Activated CD4-positive, alpha-beta memory T cell treated with anti-CD3 and anti-CD28 coated beads for 36 hours (primary cell): ENCODE measurements at regions of chr18 and their contacts with region 1.

Region 1: GRCh38 chr18:42114310-42114943 is 159.4 kb downstream of the PIK3C3 start:
- DNase-seq: peak; percentile 63
- H3K4me3 Mint-ChIP-seq: no peak overlapping the region
- H3K27ac Mint-ChIP-seq: no peak overlapping the region
- H3K4me1 Mint-ChIP-seq: peaks cover 12% of the 10 kb centered on the region
- H3K27me3 Mint-ChIP-seq: no peaks in the 10 kb centered on the region

Region 2: DNA sequence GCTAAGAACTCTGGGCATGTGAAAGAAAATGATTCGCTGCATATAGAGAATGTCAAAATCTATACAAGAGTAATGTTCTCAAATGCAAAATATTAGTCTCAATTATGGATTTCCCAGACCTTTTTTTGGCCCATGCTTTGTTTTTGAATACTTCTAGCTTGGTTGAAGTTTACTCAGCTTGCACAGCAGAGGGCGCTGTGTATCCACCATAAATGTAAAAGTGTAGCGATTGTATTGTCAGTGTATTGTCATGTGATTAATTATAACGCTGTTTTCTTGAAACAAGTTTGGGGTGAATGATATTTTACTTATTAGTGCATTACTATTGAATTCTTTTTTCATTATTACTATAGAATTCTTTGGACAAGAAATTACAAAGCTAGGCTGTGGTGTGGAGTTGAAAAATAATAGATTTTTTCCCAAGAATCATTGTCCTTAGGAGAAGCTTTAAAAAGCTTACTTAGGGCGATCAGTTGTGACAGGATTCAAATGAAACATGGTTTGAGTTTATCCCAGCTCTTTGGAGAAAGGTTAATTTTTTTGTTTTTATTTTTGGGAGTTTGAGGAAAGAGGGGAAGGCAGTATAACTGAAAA is 61.1 kb before region 1 on chr18:
- CTCF ChIA-PET with region 1: interaction called, 39 read pairs
- POLR2A ChIA-PET with region 1: no interaction called
- intact Hi-C with region 1: loop called (anchors 1 kb)
- DNase-seq: peak; percentile 63
- H3K4me3 Mint-ChIP-seq: no peak overlapping the region
- H3K27ac Mint-ChIP-seq: no peak overlapping the region
- H3K4me1 Mint-ChIP-seq: peaks cover 9% of the 10 kb centered on the region
- H3K27me3 Mint-ChIP-seq: no peaks in the 10 kb centered on the region

Region 3: GRCh38 chr18:42082415-42083234 is 31.8 kb before region 1 on chr18:
- CTCF ChIA-PET with region 1: interaction called, 19 read pairs
- POLR2A ChIA-PET with region 1: no interaction called
- intact Hi-C with region 1: no loop called
- DNase-seq: no peak
- H3K4me3 Mint-ChIP-seq: no peak overlapping the region
- H3K27ac Mint-ChIP-seq: peak overlapping the region; percentile 67
- H3K4me1 Mint-ChIP-seq: peaks cover 15% of the 10 kb centered on the region
- H3K27me3 Mint-ChIP-seq: no peaks in the 10 kb centered on the region

Region 4: GRCh38 chr18:42126586-42126985 is 12.2 kb after region 1 on chr18:
- CTCF ChIA-PET with region 1: interaction called, 12 read pairs
- POLR2A ChIA-PET with region 1: no interaction called
- intact Hi-C with region 1: no loop called
- DNase-seq: no peak
- H3K4me3 Mint-ChIP-seq: no peak overlapping the region
- H3K27ac Mint-ChIP-seq: no peak overlapping the region
- H3K4me1 Mint-ChIP-seq: no peaks in the 10 kb centered on the region
- H3K27me3 Mint-ChIP-seq: no peaks in the 10 kb centered on the region

Region 5: GRCh38 chr18:42298759-42299675 is 184.6 kb after region 1 on chr18:
- CTCF ChIA-PET with region 1: interaction called, 24 read pairs
- POLR2A ChIA-PET with region 1: no interaction called
- intact Hi-C with region 1: loop called (anchors 5 kb)
- DNase-seq: peak; percentile 69
- H3K4me3 Mint-ChIP-seq: no peak overlapping the region
- H3K27ac Mint-ChIP-seq: no peak overlapping the region
- H3K4me1 Mint-ChIP-seq: no peaks in the 10 kb centered on the region
- H3K27me3 Mint-ChIP-seq: peaks cover 5% of the 10 kb centered on the region

Region 6: DNA sequence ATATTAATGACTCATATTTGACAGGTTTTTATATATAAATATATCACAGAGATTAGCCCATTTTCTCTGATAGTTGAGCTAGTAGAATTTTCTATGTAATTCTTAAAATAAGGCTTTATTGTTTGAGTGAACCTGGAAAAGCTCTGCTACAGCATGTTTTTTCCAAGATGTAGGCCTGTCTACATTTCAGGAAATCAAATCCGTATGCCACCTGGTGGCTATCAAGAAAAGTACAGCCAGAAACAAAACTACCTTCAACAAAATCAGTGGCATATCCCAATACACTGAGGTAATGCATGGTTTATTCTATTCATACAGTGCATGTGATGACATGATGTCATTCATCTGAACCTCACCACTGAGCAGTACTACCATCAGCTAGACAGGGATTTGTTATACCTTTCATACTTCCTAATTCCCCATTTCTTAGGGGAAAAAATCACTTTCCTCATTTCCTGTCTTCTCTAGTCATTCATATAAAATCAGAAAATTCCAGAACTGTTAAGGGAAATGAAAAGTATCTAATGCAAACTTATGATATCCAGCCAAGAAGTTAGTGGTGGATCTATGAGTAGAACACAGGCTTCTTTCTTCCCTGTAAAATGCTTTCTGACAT is 1473.2 kb after region 1 on chr18:
- CTCF ChIA-PET with region 1: interaction called, 13 read pairs
- POLR2A ChIA-PET with region 1: no interaction called
- intact Hi-C with region 1: loop called (anchors 1 kb)
- DNase-seq: no peak
- H3K4me3 Mint-ChIP-seq: no peak overlapping the region
- H3K27ac Mint-ChIP-seq: no peak overlapping the region
- H3K4me1 Mint-ChIP-seq: no peaks in the 10 kb centered on the region
- H3K27me3 Mint-ChIP-seq: no peaks in the 10 kb centered on the region